Cardiac septum (tissue), 1 donor: ENCODE measurements at regions of chr1 and their contacts with region 1.

Region 1: GRCh38 chr1:36306902-36307456 is 811 bp downstream of the SH3D21 start:
- DNase-seq: peak; percentile 98

Region 2: DNA sequence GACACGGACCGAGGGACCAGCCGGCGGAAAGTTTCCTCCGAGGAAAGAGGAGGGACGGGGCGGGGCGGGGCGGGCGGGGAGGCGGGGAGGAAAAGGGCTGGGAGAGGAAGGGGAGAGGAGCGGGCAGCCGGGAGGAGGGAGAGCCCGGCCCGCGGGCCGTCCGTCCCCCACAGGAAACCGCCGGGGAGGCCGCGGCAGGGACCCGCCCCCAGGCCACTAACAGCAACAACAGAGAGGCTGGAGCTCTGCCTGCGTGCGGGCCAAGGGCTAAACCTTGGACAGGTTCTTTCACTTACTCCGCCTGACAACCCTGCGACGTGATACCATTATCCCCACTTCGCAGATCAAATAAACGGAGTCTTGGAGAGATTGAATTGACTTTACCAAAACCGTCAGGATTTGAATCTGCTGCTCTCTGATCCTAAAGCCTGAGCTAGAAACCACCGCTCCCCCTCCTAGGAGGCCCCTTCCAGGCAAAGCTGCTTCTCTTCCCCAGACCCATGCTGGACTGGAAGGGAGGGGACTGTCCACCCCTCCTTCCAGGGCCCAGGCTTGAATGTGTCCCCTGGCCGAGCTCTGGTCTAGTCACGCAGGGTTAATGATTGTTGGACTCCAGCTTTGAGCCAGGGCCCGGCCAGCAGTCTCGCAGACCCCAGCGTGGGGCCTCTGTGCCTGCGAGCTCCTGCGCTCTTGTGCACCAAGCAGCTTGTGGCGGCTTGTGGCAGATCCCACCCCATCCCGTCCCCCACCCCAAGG is 16.8 kb after region 1 on chr1 and contains the start of gene EVA1B:
- intact Hi-C with region 1: loop called (anchors 2 kb)
- DNase-seq: peak; percentile 90
- total RNA-seq, gene EVA1B: 11.3 TPM

Region 3: DNA sequence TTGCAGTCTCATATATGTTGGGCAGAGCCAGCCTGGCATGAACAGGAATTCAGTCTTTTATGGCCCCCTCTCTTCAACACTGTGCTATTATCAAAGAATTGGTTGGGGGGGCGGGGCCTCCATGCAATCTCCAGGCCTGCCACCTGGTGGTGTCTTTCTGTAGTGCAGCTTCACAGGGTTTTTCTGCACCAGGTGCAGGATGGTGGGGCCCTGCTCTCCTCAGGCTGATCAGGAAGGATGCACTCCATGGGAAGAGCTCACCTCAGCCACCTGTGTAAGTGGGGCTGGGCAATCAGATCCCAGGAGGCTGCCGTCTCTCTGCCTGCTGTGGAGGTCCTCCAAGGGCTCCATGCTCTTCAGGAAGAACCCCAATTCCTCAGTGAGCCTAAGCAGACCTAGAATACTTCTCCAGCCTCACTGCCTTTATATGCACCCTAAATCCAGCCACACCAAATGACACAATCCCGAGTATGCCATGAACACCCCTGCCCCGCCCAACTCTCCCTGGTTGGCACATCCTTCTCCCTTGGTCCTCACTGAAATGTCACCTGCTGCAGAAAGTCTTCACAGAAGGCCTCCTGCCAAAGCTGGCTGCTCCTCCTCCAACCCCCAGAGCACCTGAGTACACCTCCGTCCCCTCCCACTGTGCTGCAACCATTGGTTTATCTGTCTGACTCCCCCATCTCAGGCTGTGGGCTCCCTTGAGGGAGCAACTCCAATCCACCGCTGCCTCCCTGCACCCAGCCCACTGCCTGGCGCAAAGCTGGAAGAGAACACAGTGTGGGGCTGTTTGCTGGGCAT is 62.3 kb after region 1 on chr1:
- intact Hi-C with region 1: loop called (anchors 5 kb)
- DNase-seq: no peak

Region 4: DNA sequence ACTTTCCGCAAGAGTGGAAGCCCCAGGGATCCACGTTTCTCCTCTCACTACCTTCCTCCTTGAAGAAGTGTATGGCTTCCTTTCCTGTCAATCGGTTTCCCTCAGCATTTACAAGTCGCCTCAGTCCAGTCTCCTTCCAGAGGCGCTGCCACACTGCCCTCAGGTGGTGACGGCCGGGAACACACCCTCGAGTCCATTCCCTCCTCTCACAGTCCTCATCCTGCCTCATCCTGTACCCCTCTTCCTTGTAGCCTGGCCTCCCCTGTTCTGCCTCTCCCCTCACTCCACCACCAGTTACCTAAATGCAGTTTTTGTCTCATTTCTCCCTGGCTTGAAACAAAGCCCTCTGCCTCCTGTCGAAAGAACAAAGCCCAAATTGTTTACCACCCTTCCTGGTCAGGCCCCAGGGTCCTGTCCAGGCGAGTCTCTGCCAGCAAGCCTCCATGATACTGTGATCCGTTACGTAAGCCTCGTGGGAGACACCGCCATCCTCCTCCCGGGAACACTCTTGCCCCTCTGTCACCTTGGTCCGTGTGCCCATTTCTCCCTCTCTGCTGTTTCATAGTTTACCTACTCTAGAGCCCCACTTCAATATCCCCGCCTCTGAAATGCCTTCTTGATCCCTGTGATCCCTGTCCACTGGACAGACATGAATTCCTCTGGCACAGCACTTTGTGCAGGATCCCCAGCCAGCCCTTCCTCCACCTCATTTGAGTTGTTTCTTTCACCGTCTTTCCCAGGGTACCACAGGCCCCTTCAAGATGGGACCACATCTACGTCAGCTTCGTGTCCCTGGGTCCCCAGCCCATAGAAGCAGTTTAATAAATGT is 114.1 kb after region 1 on chr1:
- intact Hi-C with region 1: loop called (anchors 10 kb)
- DNase-seq: peak; percentile 95

Region 5: DNA sequence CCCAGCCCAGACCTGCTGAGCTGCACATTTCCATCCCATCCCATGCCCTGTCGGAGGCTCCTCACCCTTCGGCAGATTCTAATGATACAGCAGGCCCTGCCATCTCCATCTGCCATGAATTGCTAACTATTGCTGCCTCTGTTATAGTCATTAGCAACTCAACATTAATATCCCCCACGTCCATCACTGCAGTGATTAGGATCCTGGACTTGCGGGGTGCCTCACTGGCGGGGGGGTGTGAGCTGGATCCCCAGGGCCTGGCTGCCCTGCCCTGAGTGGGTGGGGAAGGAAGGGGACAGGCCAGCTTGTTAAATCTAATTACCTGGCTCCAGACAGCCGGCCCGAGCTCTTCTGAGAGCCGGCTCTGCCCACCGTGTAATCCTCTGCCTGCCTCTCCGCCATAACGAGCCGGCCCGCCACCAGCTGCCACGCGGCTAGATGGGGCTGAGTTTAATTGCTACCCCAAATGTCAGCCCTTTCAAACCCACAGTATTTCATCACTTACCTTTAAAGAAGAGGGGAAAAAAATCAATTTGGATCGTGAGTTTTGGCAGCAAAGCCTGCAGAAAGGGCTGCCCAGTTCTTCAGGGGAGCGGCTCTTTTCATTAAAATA is 403.0 kb after region 1 on chr1:
- intact Hi-C with region 1: no loop called
- DNase-seq: no peak